ENCODE measurements at regions of chr1 and their contacts with region 1.

Region 1: GRCh38 chr1:14899581-14900085 is 253.9 kb upstream of the TMEM51 start:
- DNase-seq: no peak
- H3K4me3 Mint-ChIP-seq: no peak overlapping the region
- H3K27ac Mint-ChIP-seq: no peak overlapping the region
- H3K4me1 Mint-ChIP-seq: no peaks in the 10 kb centered on the region
- H3K27me3 Mint-ChIP-seq: peaks cover 6% of the 10 kb centered on the region

Region 2: DNA sequence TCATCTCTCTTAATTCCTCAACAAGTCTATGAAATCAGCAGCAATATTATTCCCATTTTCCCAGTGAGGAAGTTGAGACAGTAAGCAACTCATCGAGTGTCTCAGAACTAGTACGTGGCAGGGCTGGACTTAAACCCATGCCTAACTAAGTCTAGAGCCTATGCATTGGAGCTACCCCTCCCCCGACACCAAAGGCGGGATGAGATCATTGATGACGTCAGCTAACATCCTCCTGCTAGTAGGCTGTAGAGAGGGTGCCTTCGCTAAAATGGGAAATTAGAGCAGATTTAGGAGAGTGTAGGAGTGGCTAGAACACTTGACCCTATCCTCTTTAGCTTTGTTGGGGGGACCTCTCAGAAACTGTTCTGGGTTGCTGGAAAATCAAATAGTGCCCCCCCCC is 308.9 kb before region 1 on chr1:
- CTCF ChIA-PET with region 1: no interaction called
- intact Hi-C with region 1: loop called (anchors 5 kb)
- DNase-seq: no peak
- H3K4me3 Mint-ChIP-seq: no peak overlapping the region
- H3K27ac Mint-ChIP-seq: no peak overlapping the region
- H3K4me1 Mint-ChIP-seq: no peaks in the 10 kb centered on the region
- H3K27me3 Mint-ChIP-seq: peaks cover 9% of the 10 kb centered on the region

Region 3: DNA sequence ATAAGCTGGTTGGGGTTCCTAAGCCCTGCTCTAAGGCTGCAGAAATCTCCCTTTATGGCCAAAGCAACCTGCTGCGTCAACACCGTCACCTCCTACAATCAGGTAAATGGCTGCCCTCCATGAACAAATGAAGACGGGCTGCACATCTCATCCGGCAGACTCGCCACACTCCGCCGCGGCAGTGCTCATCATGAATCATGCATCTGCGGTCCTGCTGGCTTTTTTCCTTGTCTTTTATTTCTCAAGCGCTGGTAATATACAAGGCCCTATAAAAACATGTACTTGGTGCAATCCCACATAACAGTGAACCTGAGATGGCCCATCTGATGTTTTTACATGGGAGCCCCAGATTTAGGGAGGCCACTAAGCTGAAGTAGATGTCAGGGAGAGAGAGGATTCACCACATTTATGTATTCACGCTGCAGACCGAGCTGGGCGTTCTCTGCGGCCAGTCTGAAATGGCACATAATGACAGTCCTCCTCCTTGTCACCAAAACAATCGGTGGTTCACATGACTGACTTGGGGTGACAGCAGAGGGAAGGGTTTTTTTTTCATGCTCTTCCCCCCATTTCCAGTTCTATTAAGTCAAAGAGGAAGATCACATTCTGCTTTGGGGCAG is 209.5 kb before region 1 on chr1:
- CTCF ChIA-PET with region 1: no interaction called
- intact Hi-C with region 1: no loop called
- DNase-seq: no peak
- H3K4me3 Mint-ChIP-seq: no peak overlapping the region
- H3K27ac Mint-ChIP-seq: no peak overlapping the region
- H3K4me1 Mint-ChIP-seq: no peaks in the 10 kb centered on the region
- H3K27me3 Mint-ChIP-seq: no peaks in the 10 kb centered on the region

Measured in activated naive CD4-positive, alpha-beta T cell treated with anti-CD3 and anti-CD28 coated beads for 36 hours (primary cell).